Heart left ventricle (tissue), 16 donors: ENCODE measurements at regions of chr10 and their contacts with region 1.

Region 1: GRCh38 chr10:62610649-62611229 is 193.8 kb upstream of the ADO start:
- DNase-seq: peak; percentile 40 to 72 (median 54)
- ATAC-seq: peak in 3 of 4 donors; percentile 74 to 83 (median 80)
- H3K4me3 ChIP-seq: no peak overlapping the region
- H3K27ac ChIP-seq: no peak overlapping the region
- H3K4me1 ChIP-seq: peaks cover 0 to 19% (median 0%) of the 10 kb centered on the region in 12 donors
- H3K27me3 ChIP-seq: peaks cover 0 to 3% (median 0%) of the 10 kb centered on the region in 9 donors
- CTCF ChIP-seq: peak; percentile 66 to 85 (median 78)
- POLR2A ChIP-seq: no peak

Region 2: DNA sequence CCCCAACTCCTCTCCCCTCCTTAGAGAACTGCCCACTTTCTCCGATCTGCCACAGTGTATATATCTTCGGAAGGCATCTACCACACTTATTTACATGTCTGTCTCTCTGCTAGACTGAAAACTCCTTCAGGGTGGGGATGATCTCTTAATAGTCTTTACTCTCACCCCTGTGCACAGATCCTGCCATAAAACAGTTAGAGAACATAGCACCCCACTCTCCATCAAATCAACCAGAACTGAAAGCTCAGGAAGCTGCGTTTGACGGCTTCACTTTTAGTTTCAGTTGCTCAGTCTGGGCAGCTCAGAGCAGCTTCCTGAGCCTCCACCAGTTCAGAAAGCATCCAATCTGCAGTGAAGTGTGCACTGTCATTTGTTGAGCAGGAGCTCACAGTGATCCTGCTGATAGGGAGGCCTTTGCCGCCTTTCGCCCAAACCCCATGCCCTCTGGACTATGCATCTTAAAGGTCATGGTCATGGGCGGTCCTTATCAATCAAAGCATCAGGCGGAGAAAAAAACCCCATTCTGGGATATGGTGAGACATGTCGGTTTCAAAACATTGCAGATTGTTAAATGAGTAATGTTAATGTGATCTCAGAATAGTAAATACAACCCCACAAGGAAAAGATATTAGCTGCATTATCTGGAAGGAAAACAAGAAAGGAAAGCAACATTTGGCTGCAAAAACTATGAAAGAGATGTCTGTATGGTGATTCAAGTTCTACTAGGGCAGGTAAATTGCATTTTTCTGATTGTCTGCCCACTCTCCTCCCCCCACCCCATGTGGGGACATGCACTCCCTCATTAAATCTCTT is 26.7 kb after region 1 on chr10:
- intact Hi-C with region 1: loop called in 1 of 10 experiments (anchors 1 kb)
- DNase-seq: peak in 2 of 5 donors; percentile 29 to 36
- ATAC-seq: peak; percentile 40 to 70 (median 54)
- H3K4me3 ChIP-seq: peak overlapping the region in 9 of 12 donors; percentile 15 to 38 (median 22)
- H3K27ac ChIP-seq: peak overlapping the region; percentile 6 to 93 (median 49)
- H3K4me1 ChIP-seq: peaks cover 0 to 83% (median 15%) of the 10 kb centered on the region in 12 donors
- H3K27me3 ChIP-seq: no peaks in the 10 kb centered on the region
- CTCF ChIP-seq: no peak
- POLR2A ChIP-seq: no peak

Region 3: GRCh38 chr10:63003816-63004453 is 393.2 kb after region 1 on chr10:
- intact Hi-C with region 1: loop called in 1 of 10 experiments (anchors 10 kb)
- DNase-seq: no peak
- ATAC-seq: no peak
- H3K4me3 ChIP-seq: no peak overlapping the region
- H3K27ac ChIP-seq: no peak overlapping the region
- H3K4me1 ChIP-seq: no peaks in the 10 kb centered on the region
- H3K27me3 ChIP-seq: peaks cover 0 to 8% (median 0%) of the 10 kb centered on the region in 9 donors
- CTCF ChIP-seq: peak in 11 of 12 donors; percentile 11 to 40 (median 25)
- POLR2A ChIP-seq: no peak

Region 4: DNA sequence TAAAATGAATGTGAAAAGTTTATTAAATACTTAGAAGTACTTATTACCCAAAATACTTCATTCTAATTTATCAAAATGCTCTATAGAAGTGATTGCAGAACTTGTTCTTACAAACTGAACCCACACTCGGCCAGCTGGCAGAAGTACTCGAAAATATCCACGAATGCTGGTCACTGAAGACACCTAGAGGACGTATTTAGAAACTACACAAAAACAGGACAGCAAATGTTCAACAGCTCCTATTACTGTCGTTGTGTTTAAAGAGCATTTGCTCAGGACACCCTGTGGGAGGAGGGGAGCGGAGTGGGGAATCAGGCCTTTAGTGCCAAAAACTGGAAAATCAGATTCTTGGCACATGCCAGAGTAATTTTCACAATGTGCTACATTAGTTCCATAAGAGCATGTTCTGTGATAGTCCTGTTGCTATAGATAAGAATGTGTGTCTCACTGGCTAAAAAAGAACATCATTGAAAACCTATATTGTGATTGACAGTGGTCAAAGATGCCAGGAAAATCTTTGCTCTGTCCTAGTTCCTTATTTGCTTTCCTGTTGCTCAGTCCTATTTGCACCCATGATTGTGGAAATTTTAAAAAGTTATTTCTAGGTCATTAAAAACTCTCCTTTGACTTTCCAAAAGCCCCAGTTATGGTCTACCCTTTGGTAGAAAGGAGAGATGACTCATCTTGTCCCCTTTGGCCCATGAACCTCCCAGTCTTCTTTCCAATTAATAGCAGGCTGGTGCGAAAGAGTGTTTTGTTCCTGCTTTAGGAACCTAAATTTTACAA is 473.4 kb after region 1 on chr10:
- intact Hi-C with region 1: loop called in 5 of 10 experiments (anchors 5 kb)
- DNase-seq: peak in 4 of 5 donors; percentile 53 to 74 (median 56)
- ATAC-seq: peak; percentile 64 to 94 (median 82)
- H3K4me3 ChIP-seq: no peak overlapping the region
- H3K27ac ChIP-seq: peak overlapping the region in 6 of 12 donors; percentile 6 to 54 (median 20)
- H3K4me1 ChIP-seq: peaks cover 0 to 14% (median 0%) of the 10 kb centered on the region in 12 donors
- H3K27me3 ChIP-seq: no peaks in the 10 kb centered on the region
- CTCF ChIP-seq: peak; percentile 52 to 78 (median 70)
- POLR2A ChIP-seq: no peak